Right ventricle myocardium superior (tissue), 1 donor: ENCODE measurements at regions of chr10 and their contacts with region 1.

Region 1: DNA sequence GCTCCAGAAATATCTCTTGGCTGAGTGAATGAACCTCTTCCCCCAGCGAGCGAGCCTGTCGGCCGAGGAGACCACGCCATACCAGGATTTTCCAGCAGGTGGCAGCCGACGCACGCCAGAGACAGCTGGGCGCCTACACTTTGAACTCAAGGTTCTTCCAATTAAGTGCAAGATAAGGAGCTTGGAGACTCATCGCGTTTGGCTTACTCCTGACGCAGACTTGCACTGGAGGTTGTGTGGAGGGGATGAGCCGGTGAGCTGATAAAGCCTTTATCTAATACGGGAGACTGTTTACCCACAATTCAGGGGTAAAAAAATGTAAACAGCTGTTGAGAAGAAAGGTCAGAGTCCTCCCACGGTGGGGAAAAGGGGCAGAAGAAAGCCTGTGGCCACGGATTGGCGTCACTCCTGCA is 45.9 kb upstream of the EMX2 start:
- DNase-seq: peak; percentile 85
- ATAC-seq: peak; percentile 95

Region 2: GRCh38 chr10:117653170-117653515 is 156.5 kb after region 1 on chr10:
- intact Hi-C with region 1: no loop called
- DNase-seq: no peak
- ATAC-seq: no peak

Region 3: GRCh38 chr10:118459726-118460193 is 963.1 kb after region 1 on chr10:
- intact Hi-C with region 1: loop called (anchors 10 kb)
- DNase-seq: peak; percentile 48
- ATAC-seq: peak; percentile 84